Activated T-helper 1 cell treated with anti-CD3 and anti-CD28 coated beads, Interleukin-12 subunit alpha, Interleukin-12 subunit beta, Interleukin-2, Interleukin-4 antibody, amounts not matched to agents 30 ng/mL and 10 ng/mL and 1 ng/mL, durations not matched to agents 14 hours and 24 hours and 36 hours (primary cell): ENCODE measurements at regions of chr4 and their contacts with region 1.

Region 1: DNA sequence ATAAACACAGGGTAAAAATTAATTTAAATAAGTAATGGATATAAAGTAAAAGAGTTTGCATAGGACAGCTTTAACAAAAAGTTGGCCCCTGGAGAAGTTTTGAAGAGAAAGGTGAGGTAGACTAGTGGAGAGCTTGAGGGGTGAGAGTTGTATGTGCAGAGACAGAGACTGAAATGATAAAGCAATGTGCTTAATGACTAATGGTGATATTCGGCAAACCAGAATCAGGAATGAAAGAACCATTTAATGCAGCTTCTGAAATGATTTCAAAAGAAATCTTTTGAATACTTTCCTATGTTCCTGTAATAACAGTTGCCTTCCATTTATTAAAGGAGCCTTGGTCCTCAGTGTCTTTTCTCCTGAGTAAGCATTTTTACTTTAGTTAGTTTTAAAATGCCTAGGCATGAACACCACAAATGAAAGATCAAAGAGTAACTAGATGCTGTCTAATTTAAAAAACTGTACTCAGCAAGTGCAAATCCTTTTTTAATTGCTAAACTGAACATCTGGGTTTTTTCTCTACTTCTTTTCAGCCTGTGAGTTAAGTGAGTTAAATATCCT is 28.5 kb downstream of the CAMK2D start:
- DNase-seq: no peak
- H3K4me3 Mint-ChIP-seq: no peak overlapping the region
- H3K27ac Mint-ChIP-seq: peak overlapping the region; percentile 19
- H3K4me1 Mint-ChIP-seq: peaks cover 68% of the 10 kb centered on the region
- H3K27me3 Mint-ChIP-seq: no peaks in the 10 kb centered on the region

Region 2: GRCh38 chr4:113327494-113327893 is 405.6 kb before region 1 on chr4:
- intact Hi-C with region 1: no loop called
- DNase-seq: no peak
- H3K4me3 Mint-ChIP-seq: no peak overlapping the region
- H3K27ac Mint-ChIP-seq: no peak overlapping the region
- H3K4me1 Mint-ChIP-seq: no peaks in the 10 kb centered on the region
- H3K27me3 Mint-ChIP-seq: peaks cover 25% of the 10 kb centered on the region

Region 3: GRCh38 chr4:113697429-113697828 is 35.6 kb before region 1 on chr4:
- intact Hi-C with region 1: loop called (anchors 1 kb)
- DNase-seq: no peak
- H3K4me3 Mint-ChIP-seq: no peak overlapping the region
- H3K27ac Mint-ChIP-seq: peak overlapping the region; percentile 74
- H3K4me1 Mint-ChIP-seq: peaks cover 18% of the 10 kb centered on the region
- H3K27me3 Mint-ChIP-seq: no peaks in the 10 kb centered on the region

Region 4: DNA sequence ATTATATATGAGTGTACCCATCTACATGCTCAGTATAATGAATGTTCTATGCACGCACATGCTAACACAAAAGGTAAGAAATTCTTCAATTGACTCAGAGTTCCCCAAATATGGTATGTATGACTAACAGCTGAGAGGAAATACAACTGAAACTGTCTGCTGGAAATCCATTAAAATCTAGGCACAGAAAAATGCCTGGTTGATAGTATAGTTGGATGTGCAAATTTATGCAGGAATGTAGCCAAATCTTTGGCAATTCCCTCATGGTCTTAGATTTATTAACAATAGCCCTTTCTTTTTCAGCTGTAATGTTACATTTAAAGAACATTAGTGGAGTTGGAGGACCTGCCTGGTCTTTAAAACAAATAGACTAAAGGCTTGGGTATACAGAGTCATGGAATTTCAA is 23.0 kb after region 1 on chr4:
- intact Hi-C with region 1: loop called (anchors 1 kb)
- DNase-seq: no peak
- H3K4me3 Mint-ChIP-seq: peak overlapping the region; percentile 100
- H3K27ac Mint-ChIP-seq: peak overlapping the region; percentile 73
- H3K4me1 Mint-ChIP-seq: peaks cover 61% of the 10 kb centered on the region
- H3K27me3 Mint-ChIP-seq: no peaks in the 10 kb centered on the region